Sigmoid colon (tissue), 7 donors: ENCODE measurements at regions of chr10 and their contacts with region 1.

Region 1: DNA sequence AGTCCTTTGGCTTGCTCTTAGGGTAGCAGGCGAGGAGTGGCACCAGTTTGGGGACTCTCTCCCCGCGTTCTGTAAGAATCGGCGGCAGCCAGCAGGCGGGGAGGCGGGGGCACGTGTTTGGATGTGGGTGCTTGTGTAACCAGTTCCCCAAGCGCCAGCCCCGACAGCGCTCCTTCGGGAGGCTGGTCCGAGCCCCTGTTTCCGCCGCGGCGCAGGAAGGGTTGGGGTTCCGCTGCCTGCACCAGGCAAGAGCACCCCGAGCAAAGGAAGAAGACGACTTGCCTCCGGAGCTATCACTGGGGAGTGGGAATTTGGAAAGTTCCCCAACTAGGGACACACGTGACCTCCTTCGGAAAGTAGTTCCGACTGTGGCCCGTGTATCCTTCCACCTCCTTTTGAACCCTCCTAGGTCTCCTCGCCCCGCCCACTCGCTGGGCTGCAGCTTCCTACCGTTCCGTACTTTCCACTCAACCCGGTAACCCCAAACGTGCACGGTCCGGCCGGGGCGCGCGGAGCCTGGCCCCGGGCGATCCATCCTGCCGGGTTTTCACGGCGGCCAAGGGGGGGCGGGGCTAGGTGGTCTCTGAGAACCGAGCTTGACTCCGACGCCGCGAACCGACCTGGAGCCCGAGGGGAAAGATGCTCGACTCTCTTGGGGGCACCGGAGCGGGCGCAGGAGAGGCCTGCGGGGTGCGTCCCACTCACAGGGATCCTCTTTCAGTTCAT is 1.2 kb downstream of the KLLN start:
- DNase-seq: peak; percentile 99
- H3K4me3 ChIP-seq: peak overlapping the region; percentile 82 to 98 (median 91)
- H3K27ac ChIP-seq: peak overlapping the region; percentile 95 to 99 (median 98)
- H3K4me1 ChIP-seq: peaks cover 2 to 9% (median 9%) of the 10 kb centered on the region in 4 donors
- H3K27me3 ChIP-seq: no peaks in the 10 kb centered on the region
- CTCF ChIP-seq: no peak
- EP300 ChIP-seq: peak in 1 of 4 donors; percentile 27
- POLR2A ChIP-seq: peak; percentile 40 to 48

Region 2: GRCh38 chr10:87817609-87818504 is 44.3 kb before region 1 on chr10 and contains the start of gene ATAD1:
- intact Hi-C with region 1: loop called (anchors 2 kb)
- DNase-seq: peak; percentile 89
- H3K4me3 ChIP-seq: peak within 1 kb of the TSS; percentile 63 to 70 (median 67)
- H3K27ac ChIP-seq: peak within 1 kb of the TSS; percentile 82 to 85 (median 83)
- H3K4me1 ChIP-seq: peaks cover 0 to 39% (median 22%) of the 10 kb centered on the region in 4 donors
- H3K27me3 ChIP-seq: no peaks in the 10 kb centered on the region
- CTCF ChIP-seq: no peak
- EP300 ChIP-seq: no peak
- POLR2A ChIP-seq: peak; percentile 27 to 30
- total RNA-seq, gene ATAD1: 28.0 to 45.3 (median 37.3) TPM

Region 3: GRCh38 chr10:88386821-88387773 is 525.0 kb after region 1 on chr10:
- intact Hi-C with region 1: loop called (anchors 5 kb)
- DNase-seq: peak; percentile 61
- H3K4me3 ChIP-seq: peak overlapping the region in 3 of 4 donors; percentile 8 to 27 (median 23)
- H3K27ac ChIP-seq: peak overlapping the region; percentile 48 to 63 (median 52)
- H3K4me1 ChIP-seq: peaks cover 0 to 29% (median 18%) of the 10 kb centered on the region in 4 donors
- H3K27me3 ChIP-seq: no peaks in the 10 kb centered on the region
- CTCF ChIP-seq: no peak
- EP300 ChIP-seq: no peak
- POLR2A ChIP-seq: no peak